PC-9 (cell line): ENCODE measurements at regions of chr20 and their contacts with region 1.

Region 1: DNA sequence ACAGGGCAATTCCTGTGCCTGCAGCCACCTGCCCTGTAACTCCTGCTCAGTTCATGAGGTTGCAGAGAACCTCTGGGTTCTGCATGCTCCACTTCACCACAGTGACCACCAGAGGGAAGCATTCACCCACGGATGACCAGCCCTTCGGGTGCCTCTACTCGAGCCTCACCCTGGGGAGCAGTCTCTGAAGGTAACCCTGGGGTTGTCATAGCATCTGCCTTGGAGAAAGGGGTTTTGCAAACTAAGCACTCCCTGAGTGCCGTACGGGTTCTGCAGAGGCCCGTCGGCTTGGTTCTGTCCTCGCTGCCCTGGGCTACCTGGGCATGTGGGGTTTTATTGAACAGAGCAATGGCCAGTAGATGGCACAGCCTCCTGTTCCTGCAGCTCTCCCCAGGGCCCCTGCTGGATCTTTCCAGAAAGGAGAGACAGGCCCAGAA is 10.2 kb upstream of the CST5 start:
- DNase-seq: peak; percentile 63 to 83
- H3K4me3 ChIP-seq: no peak overlapping the region; the same call in 1 of the 2 replicates
- H3K27ac ChIP-seq: no peak overlapping the region
- H3K4me1 ChIP-seq: peaks cover 14% of the 10 kb centered on the region
- H3K27me3 ChIP-seq: no peaks in the 10 kb centered on the region
- CTCF ChIP-seq: peak; percentile 96

Region 2: DNA sequence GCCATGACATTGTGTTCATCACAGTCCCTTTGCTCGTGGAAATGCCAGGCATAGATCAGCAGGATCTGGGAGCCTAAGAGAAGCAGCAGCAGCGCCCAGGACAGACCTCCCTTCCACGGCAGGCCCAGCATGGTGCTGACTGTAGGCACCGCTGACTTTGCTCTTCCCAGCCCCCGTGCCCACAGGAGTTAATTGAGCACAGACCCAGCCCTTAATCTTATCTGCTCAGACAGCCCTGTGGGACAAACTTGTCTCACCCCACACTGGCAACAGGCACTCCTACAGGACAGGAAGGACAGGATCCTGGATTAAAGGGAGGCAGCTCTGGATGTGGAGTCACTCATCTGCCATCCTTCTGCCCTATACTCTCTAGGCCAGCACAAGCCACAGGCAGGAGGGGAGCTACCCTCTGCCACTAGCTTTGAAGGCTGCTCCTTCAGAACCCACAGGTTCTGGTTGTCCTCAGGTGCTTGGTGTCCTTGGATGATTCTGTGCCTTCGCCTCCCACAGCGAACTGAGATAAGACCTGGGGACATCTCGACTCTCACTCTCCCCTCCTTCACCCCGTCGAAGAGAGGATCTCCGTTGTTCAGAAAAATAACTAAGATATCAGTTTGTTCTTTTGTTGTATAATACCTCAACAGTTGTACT is 321.3 kb before region 1 on chr20 and contains the start of gene CST9L:
- CTCF ChIA-PET with region 1: no interaction called
- POLR2A ChIA-PET with region 1: no interaction called
- intact Hi-C with region 1: no loop called
- DNase-seq: no peak
- H3K4me3 ChIP-seq: no peak within 1 kb of the TSS
- H3K27ac ChIP-seq: no peak within 1 kb of the TSS
- H3K4me1 ChIP-seq: no peaks in the 10 kb centered on the region
- H3K27me3 ChIP-seq: peaks cover 10% of the 10 kb centered on the region
- CTCF ChIP-seq: no peak
- total RNA-seq, gene CST9L: not detected in 2 replicates

Region 3: GRCh38 chr20:23668477-23668951 is 221.3 kb before region 1 on chr20:
- CTCF ChIA-PET with region 1: no interaction called
- POLR2A ChIA-PET with region 1: no interaction called
- intact Hi-C with region 1: loop called (anchors 5 kb)
- DNase-seq: peak; percentile 59 to 66
- H3K4me3 ChIP-seq: no peak overlapping the region
- H3K27ac ChIP-seq: no peak overlapping the region
- H3K4me1 ChIP-seq: peaks cover 6% of the 10 kb centered on the region
- H3K27me3 ChIP-seq: no peaks in the 10 kb centered on the region
- CTCF ChIP-seq: peak; percentile 96

Region 4: GRCh38 chr20:23874747-23875146 is 15.0 kb before region 1 on chr20:
- CTCF ChIA-PET with region 1: no interaction called
- POLR2A ChIA-PET with region 1: no interaction called
- intact Hi-C with region 1: no loop called
- DNase-seq: no peak
- H3K4me3 ChIP-seq: no peak overlapping the region
- H3K27ac ChIP-seq: no peak overlapping the region
- H3K4me1 ChIP-seq: peaks cover 29% of the 10 kb centered on the region
- H3K27me3 ChIP-seq: no peaks in the 10 kb centered on the region
- CTCF ChIP-seq: no peak

Region 5: DNA sequence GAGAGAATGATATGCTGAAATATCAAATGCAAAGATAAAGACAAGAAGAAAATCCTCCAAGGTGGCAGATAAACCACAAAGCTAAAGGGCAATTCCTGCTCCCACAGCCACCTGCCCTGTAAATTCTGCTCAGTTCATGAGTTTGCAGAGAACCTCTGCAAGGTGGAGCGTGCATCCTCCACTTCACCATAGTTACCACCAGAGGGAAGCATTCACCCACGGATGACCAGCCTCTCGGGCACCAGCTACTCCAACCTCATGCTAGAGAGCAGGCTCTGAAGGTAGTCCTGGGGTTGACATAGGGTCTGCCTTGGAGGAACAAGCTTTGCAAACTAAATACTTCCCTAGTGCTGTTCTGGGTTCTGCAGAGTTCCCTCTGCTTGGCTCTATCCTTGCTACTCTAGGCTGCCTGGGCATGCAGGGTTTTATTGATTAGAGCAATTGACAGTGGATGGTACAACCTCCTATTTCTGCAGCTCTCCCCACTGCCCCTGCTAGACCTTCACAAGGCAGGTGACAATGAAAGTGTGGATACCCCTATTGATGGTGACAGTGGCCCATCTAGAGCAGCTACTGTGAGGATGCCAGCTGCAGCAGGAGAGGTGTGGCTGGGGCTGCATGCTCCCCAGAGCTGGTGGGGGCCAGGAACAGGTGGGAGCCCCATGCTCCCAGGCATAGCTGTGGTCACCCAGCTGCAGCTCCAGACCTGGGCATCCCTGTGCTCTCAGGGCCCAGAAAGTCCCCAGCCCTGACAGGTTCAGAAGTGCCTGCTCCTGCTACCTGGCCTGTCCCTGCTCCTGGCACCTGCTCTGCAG is 47.7 kb after region 1 on chr20:
- CTCF ChIA-PET with region 1: no interaction called
- POLR2A ChIA-PET with region 1: no interaction called
- intact Hi-C with region 1: loop called (anchors 2 kb)
- DNase-seq: peak; percentile 60 to 75
- H3K4me3 ChIP-seq: no peak overlapping the region
- H3K27ac ChIP-seq: no peak overlapping the region
- H3K4me1 ChIP-seq: no peaks in the 10 kb centered on the region
- H3K27me3 ChIP-seq: no peaks in the 10 kb centered on the region
- CTCF ChIP-seq: peak; percentile 92

Region 6: DNA sequence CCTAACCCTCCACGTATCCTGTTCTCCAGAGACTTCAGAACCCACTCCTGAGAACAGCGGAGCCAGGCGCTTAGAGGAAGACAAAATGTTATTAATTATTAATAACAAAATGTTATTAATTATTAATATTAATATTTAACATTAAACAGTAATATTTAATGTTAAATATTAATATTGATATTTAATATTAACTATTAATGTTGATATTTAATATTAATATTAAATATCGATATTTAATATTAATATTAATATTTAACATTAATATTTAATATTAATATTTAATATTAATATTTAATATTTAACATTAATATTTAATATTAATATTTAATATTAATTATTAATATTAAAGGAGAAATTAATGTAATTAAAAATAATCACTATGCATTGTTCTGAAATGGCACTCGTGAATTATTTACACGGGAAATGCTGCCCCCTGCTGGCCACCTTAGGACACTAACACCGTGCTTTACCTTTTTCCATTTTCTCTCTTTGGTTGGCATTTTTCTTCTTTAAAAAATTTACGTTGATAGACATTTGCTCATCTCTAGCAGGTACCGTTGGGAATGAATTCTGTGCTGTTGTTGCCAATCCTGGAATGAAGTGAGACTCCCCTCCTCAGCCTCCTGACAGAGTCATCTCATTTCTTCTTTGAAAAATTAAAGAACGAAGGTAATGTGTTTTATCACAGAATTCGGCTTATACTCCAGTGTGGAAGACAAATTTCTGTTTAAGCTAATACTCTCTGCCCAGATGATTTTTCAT is 106.3 kb after region 1 on chr20:
- CTCF ChIA-PET with region 1: no interaction called
- POLR2A ChIA-PET with region 1: no interaction called
- intact Hi-C with region 1: loop called (anchors 5 kb)
- DNase-seq: peak in 1 of 2 experiments; percentile 45
- H3K4me3 ChIP-seq: no peak overlapping the region
- H3K27ac ChIP-seq: no peak overlapping the region
- H3K4me1 ChIP-seq: 0 out of 2 replicates have a peak, but pooled peaks cover 7% of the 10 kb centered on the region
- H3K27me3 ChIP-seq: no peaks in the 10 kb centered on the region
- CTCF ChIP-seq: peak; percentile 84

Region 7: DNA sequence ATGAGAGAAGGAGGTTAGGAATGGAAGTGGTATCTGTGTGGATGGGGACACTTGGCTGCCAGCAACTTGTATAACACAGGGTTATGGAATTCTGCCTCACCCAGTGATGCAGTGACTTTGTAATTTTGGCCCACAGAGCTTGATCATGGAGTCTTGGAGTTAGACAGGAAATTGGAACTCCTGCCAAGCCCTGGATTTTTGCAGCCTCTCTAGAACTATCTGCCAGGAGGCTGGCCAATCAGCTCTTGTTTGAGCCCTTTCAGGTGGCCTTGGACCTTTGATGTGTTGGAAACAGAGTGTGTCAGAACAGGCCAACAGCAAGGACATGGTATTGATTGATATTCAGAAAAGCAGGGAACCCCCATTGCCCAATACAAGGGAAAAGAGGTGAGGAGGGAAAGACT is 256.4 kb after region 1 on chr20:
- CTCF ChIA-PET with region 1: no interaction called
- POLR2A ChIA-PET with region 1: no interaction called
- intact Hi-C with region 1: no loop called
- DNase-seq: peak in 1 of 2 experiments; percentile 52
- H3K4me3 ChIP-seq: no peak overlapping the region
- H3K27ac ChIP-seq: peak overlapping the region; percentile 69
- H3K4me1 ChIP-seq: peaks cover 20% of the 10 kb centered on the region
- H3K27me3 ChIP-seq: no peaks in the 10 kb centered on the region
- CTCF ChIP-seq: no peak

Region 8: GRCh38 chr20:24781422-24781980 is 891.7 kb after region 1 on chr20:
- CTCF ChIA-PET with region 1: no interaction called
- POLR2A ChIA-PET with region 1: no interaction called
- intact Hi-C with region 1: loop called (anchors 5 kb)
- DNase-seq: peak in 1 of 2 experiments; percentile 32
- H3K4me3 ChIP-seq: no peak overlapping the region
- H3K27ac ChIP-seq: no peak overlapping the region
- H3K4me1 ChIP-seq: no peaks in the 10 kb centered on the region
- H3K27me3 ChIP-seq: no peaks in the 10 kb centered on the region
- CTCF ChIP-seq: peak; percentile 69

Region 9: DNA sequence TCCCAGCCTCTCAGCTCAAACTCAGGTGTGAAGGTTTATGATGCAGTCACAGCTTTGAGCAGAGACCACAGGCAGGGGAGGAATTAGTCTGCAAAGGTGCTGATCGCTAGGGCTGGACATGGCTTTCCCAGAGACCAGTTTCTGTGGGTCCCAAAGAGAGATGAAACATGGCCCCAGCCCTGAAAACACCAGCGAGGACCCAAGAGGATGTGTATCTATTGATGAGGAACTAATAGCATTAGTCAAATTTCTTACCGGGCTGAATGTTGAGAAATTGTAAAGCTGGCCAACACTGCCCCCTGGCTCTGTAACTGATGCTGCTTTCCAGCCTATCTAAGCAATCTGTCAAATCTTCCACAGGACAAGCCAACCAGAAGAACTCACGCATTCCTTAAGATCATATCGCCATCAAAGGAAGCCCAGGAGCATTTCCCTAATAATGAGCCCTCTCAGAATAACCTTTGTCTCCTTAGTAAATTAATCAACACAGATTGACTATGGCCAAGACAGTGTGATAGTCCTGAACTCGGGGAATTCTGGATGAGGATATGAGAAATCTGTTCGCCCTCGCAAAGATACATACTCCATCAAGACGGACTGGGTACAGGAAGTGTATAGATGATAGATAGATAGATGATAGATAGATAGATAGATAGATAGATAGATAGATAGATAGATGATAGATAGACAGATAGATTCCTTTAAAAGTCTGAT is 1176.0 kb after region 1 on chr20:
- CTCF ChIA-PET with region 1: no interaction called
- POLR2A ChIA-PET with region 1: no interaction called
- intact Hi-C with region 1: loop called (anchors 5 kb)
- DNase-seq: peak; percentile 68 to 76
- H3K4me3 ChIP-seq: no peak overlapping the region
- H3K27ac ChIP-seq: no peak overlapping the region
- H3K4me1 ChIP-seq: peaks cover 24% of the 10 kb centered on the region
- H3K27me3 ChIP-seq: no peaks in the 10 kb centered on the region
- CTCF ChIP-seq: peak; percentile 83